ENCODE measurements at regions of chr2 and their contacts with region 1.

Region 1: GRCh38 chr2:99066075-99066958 is 75.2 kb upstream of the C2orf15 start:
- DNase-seq: no peak
- ATAC-seq: no peak
- H3K4me3 ChIP-seq: no peak overlapping the region
- H3K27ac ChIP-seq: no peak overlapping the region
- H3K4me1 ChIP-seq: no peaks in the 10 kb centered on the region
- H3K27me3 ChIP-seq: no peaks in the 10 kb centered on the region
- CTCF ChIP-seq: peak in 3 of 5 experiments; percentile 9 to 35 (median 11)
- POLR2A ChIP-seq: no peak

Region 2: GRCh38 chr2:98649135-98649991 is 417.0 kb before region 1 on chr2:
- in situ Hi-C with region 1: loop called (anchors 10 to 25 kb)
- intact Hi-C with region 1: loop called (anchors 5 kb)
- DNase-seq: peak; percentile 39 to 69
- ATAC-seq: peak; percentile 93 to 94
- H3K4me3 ChIP-seq: no peak overlapping the region
- H3K27ac ChIP-seq: no peak overlapping the region
- H3K4me1 ChIP-seq: no peaks in the 10 kb centered on the region
- H3K27me3 ChIP-seq: no peaks in the 10 kb centered on the region
- CTCF ChIP-seq: peak; percentile 94 to 99 (median 96)
- POLR2A ChIP-seq: no peak

Region 3: DNA sequence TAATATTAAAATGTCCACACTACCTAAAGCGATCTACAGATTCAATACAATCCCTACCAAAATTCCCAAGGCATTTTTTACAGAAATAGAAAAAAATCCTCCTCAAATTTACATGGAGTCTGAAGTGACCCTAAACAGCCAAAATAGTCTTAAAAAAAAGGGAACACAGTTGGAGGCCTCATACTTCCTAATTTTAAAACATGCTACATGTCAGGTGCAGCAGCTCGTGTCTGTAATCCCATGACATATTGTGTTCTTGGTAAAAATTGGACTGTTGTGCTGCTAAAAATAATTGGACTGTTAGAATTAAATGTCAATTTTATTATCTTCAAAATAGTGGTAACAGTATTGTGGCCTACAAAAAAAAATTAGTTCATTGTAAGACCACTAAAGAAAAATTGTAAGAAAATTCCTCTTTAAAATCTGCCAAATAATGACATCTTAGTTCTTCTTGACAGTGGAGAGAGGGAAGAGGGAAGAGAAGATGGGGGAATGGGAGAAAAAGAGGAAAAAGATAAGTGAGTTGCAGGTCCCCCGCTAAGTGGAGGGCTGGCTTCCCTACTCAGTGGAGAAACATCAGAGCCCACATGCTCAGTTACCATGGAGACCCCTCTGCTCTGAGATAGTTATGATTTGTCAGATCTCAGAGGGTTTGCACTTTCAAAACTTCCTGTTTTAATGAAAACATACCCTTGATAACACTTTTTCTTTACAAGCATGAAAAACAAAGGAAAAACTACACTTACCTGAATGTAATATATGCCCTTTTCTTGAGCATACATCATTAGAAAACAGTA is 411.4 kb before region 1 on chr2:
- in situ Hi-C with region 1: loop called in 2 of 4 experiments (anchors 10 to 25 kb)
- intact Hi-C with region 1: no loop called
- DNase-seq: peak in 1 of 2 donors; percentile 21
- ATAC-seq: no peak
- H3K4me3 ChIP-seq: no peak overlapping the region
- H3K27ac ChIP-seq: peak overlapping the region in 1 of 4 donors; percentile 12
- H3K4me1 ChIP-seq: no peaks in the 10 kb centered on the region
- H3K27me3 ChIP-seq: no peaks in the 10 kb centered on the region
- CTCF ChIP-seq: no peak
- POLR2A ChIP-seq: no peak

Region 4: GRCh38 chr2:98664327-98664726 is 402.0 kb before region 1 on chr2:
- in situ Hi-C with region 1: loop called in 2 of 4 experiments (anchors 10 to 25 kb)
- intact Hi-C with region 1: no loop called
- DNase-seq: no peak
- ATAC-seq: peak in 1 of 2 donors; percentile 39
- H3K4me3 ChIP-seq: no peak overlapping the region
- H3K27ac ChIP-seq: no peak overlapping the region
- H3K4me1 ChIP-seq: no peaks in the 10 kb centered on the region
- H3K27me3 ChIP-seq: no peaks in the 10 kb centered on the region
- CTCF ChIP-seq: no peak
- POLR2A ChIP-seq: no peak